BJ (cell line): ENCODE measurements at regions of chr11 and their contacts with region 1.

Region 1: GRCh38 chr11:66222358-66223149 is 45.9 kb upstream of the RAB1B start:
- DNase-seq: peak; percentile 33
- H3K4me3 ChIP-seq: no peak overlapping the region
- H3K27me3 ChIP-seq: no peaks in the 10 kb centered on the region
- CTCF ChIP-seq: peak; percentile 100

Region 2: DNA sequence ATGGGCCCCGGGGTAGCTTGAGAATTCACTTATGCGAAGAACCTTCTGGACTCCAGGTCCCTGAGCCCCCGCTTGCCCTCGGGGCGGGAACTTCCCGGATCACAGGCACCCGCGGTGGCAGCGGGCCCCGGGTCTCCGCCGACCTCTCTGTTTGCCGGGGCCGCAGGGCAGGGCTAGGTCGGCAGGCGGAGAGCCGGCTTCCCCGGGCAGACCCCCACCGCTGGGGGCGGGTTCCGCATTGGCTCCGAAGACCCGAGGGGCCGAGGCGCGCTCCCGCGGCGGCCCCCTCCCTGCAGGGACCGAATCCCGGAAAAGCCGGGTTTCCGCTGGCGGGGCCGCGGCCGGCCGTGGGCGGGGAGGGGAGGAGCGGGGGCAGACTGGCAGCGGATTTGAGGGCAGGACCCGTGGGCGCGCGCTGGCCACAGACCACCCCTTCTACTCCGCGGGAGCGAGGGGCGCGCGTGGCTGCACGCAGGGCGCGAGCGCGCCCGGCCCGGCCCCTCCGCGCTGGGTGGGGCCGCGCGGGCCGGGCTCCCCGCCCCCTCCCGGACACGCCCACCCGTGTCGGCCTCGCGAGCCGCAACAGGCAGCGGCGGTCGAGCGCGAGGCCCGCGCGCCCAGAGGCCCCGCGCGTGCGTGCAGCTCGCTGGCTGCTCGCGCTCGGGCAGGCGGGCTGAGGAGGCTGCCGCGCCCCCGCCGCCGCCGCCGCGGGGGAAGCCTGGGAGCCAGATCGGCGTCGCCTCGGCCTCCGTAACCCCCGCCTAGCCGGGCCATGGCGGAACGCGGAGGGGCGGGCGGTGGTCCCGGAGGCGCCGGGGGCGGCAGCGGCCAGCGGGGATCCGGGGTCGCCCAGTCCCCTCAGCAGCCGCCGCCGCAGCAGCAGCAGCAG is 152.6 kb before region 1 on chr11 and contains the start of gene PACS1:
- CTCF ChIA-PET with region 1: interaction called, 10 read pairs
- POLR2A ChIA-PET with region 1: no interaction called
- DNase-seq: peak; percentile 26
- H3K4me3 ChIP-seq: peak within 1 kb of the TSS; percentile 84
- H3K27me3 ChIP-seq: no peaks in the 10 kb centered on the region
- CTCF ChIP-seq: no peak
- polyA plus RNA-seq, gene PACS1: 34.3 and 35.8 TPM in 2 replicates

Region 3: DNA sequence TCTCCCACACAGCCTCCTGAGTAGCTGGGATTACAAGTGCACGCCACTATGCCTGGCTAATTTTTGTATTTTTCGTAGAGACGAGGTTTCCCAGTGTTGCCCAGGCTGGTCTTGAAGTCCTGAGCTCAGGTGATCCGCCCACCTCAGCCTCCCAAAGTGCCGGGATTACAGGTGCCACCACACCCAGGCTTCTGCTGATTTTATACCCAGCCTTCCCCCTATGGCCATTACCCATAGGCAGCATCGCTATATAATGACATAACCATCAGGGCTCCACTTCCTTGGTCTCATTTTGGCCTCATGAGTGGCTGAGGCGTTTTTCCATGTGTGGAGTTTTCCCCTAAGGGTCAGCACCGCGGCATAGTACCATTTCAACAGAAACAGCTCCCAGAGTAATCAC is 14.7 kb before region 1 on chr11:
- CTCF ChIA-PET with region 1: interaction called, 17 read pairs
- POLR2A ChIA-PET with region 1: no interaction called
- DNase-seq: no peak
- H3K4me3 ChIP-seq: no peak overlapping the region
- H3K27me3 ChIP-seq: no peaks in the 10 kb centered on the region
- CTCF ChIP-seq: no peak

Region 4: DNA sequence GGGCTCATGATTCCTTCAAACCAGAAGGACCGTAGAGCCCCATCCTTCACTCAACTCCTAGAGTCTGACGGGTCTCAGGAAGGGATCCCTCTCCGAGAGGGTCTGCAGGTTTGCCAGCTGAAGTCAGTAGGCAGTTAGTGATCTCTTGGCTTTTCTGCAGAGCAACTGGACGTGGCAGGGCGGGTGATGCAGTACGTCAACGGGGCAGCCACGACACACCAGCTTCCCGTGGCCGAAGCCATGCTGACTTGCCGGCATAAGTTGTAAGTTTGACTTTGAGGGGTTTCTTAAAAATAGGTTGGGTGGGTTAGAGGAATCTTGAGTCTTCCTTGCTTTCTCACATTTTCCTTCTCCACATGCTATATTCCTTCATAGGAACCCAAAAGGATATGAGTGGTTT is 12.6 kb after region 1 on chr11:
- CTCF ChIA-PET with region 1: interaction called, 29 read pairs
- POLR2A ChIA-PET with region 1: no interaction called
- DNase-seq: no peak
- H3K4me3 ChIP-seq: no peak overlapping the region
- H3K27me3 ChIP-seq: no peaks in the 10 kb centered on the region
- CTCF ChIP-seq: no peak

Region 5: DNA sequence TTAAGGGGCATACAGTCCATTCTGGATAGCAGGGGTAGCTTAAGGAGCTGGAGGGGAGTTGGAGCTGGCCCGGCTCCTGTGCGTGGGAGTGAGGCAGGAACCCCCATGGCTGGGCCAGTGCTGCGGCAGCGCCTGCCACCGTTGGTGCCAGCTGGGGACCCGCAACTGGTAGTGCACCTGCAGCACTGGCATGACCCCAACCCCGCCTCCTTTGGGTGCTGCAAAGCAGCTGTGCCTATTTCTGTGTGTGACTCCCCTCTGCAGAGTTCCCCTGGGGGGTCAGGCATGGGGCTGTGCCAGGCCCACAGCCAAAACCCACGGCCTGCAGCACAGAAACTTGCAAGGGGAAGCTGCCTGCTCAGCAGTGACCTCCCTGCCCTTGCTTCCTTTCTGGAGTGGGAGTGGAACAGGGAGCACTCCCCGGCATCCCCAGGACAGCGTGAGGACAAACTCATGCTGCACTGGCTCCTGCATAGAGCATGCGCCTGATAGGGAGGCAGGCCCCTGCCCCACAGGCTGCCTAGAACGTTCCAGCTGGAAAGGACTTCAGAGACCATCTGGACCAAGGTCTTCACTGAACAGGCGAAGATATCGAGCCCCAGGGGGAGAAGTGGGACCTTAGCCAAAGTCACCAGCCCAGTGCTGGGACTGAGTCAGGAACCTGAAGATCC is 19.7 kb after region 1 on chr11:
- CTCF ChIA-PET with region 1: interaction called, 14 read pairs
- POLR2A ChIA-PET with region 1: no interaction called
- DNase-seq: no peak
- H3K4me3 ChIP-seq: no peak overlapping the region
- H3K27me3 ChIP-seq: no peaks in the 10 kb centered on the region
- CTCF ChIP-seq: no peak

Region 6: GRCh38 chr11:66251809-66252208 is 29.3 kb after region 1 on chr11:
- CTCF ChIA-PET with region 1: interaction called, 13 read pairs
- POLR2A ChIA-PET with region 1: no interaction called
- DNase-seq: no peak
- H3K4me3 ChIP-seq: no peak overlapping the region
- H3K27me3 ChIP-seq: no peaks in the 10 kb centered on the region
- CTCF ChIP-seq: no peak